BJ (cell line): ENCODE measurements at regions of chr16 and their contacts with region 1.

Region 1: GRCh38 chr16:53743149-53743566 is 39.2 kb downstream of the FTO start:
- DNase-seq: no peak
- H3K4me3 ChIP-seq: no peak overlapping the region
- H3K27me3 ChIP-seq: no peaks in the 10 kb centered on the region
- CTCF ChIP-seq: peak; percentile 65

Region 2: GRCh38 chr16:53703590-53704444 is 39.3 kb before region 1 on chr16 and contains the starts of genes FTO and RPGRIP1L:
- CTCF ChIA-PET with region 1: no interaction called
- POLR2A ChIA-PET with region 1: no interaction called
- DNase-seq: peak; percentile 98
- H3K4me3 ChIP-seq: peak within 1 kb of the TSS; percentile 63
- H3K27me3 ChIP-seq: no peaks in the 10 kb centered on the region
- CTCF ChIP-seq: no peak
- polyA plus RNA-seq, gene FTO: 86.3 and 95.2 TPM in 2 replicates
- polyA plus RNA-seq, gene RPGRIP1L: 5.0 and 8.3 TPM in 2 replicates

Region 3: GRCh38 chr16:53726625-53727024 is 16.5 kb before region 1 on chr16:
- CTCF ChIA-PET with region 1: interaction called, 15 read pairs
- POLR2A ChIA-PET with region 1: no interaction called
- DNase-seq: no peak
- H3K4me3 ChIP-seq: no peak overlapping the region
- H3K27me3 ChIP-seq: no peaks in the 10 kb centered on the region
- CTCF ChIP-seq: no peak

Region 4: GRCh38 chr16:53754909-53755535 is 11.9 kb after region 1 on chr16:
- CTCF ChIA-PET with region 1: interaction called, 22 read pairs
- POLR2A ChIA-PET with region 1: no interaction called
- DNase-seq: no peak
- H3K4me3 ChIP-seq: no peak overlapping the region
- H3K27me3 ChIP-seq: no peaks in the 10 kb centered on the region
- CTCF ChIP-seq: no peak